ENCODE measurements at regions of chr17 and their contacts with region 1.

Region 1: DNA sequence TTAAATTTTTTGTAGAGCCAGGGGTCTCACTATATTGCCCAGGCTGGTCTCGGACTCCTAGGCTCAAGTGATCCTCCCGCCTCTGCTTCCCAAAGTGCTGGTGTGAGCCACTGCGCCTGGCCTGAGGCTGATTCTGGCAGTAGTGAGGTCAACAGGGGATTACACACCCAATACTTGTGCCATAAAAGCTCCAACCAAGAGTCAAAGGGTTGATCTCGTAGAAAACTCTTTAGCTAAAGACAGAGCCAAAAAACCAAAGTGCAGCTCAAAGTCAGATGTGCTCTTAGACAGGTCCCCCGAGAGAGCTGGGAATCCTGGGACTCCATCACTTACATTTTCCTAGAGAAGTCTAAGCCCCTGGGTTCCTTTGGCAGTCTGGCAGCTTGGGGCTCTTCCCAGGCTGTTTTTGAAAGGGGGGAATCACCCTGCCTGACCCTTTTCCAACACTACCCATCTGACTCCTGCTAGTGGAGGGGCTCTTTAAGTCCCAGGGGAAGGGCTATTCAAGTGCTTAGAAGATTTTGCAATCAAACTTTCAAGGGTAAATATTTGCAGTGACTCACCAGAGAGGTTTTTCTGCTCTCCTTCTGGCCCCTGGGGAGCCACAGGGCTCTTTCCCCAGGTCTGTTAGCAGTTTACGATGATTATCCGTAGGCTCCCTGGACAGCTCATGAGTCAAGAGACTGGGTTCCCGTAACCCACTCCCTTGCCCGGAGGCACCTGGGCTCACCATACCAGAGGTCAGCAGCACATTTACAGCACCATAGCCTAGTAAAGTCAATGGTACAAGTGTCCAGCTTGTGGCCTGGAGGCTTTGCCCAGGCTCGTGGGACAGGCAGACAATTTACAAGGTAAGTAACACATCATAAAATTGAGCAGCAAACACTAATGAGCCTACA is 408.7 kb downstream of the SLC39A11 start:
- DNase-seq: peak; percentile 98
- H3K4me3 Mint-ChIP-seq: peak overlapping the region; percentile 24
- H3K27ac Mint-ChIP-seq: peak overlapping the region; percentile 92
- H3K4me1 Mint-ChIP-seq: peaks cover 42% of the 10 kb centered on the region
- H3K27me3 Mint-ChIP-seq: no peaks in the 10 kb centered on the region
- CTCF ChIP-seq: no peak

Region 2: DNA sequence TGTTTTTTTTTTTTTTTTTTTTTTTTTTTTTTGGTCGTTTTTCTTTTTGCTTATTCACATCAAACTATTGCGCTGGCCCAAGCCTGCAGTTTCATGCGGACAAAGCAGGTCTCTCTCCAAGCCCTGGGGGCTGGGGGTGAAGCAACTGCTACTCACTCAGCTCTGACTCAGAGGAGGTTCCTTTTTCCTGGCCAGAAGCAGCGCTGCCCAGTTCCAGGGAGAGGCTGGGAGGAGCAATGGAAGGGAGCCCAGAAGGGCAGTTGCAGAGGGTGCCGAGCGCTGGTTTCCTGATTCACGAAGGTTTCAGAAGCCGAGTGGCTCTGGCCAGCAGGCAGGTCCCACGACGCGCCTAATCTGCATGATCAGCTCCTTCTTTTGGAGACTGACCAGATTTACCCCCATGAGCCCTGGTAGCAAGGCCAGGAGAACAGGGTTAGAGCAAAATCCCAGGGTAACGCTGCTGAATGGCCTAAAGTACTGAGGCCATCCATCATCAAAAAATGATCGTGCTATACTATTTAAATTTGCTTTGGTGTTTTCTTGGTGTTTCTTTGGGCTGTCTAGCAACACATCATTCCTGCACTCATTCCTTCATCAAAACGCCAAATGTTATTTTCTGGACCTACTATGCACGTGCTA is 707.6 kb before region 1 on chr17:
- CTCF ChIA-PET with region 1: no interaction called
- POLR2A ChIA-PET with region 1: no interaction called
- intact Hi-C with region 1: loop called (anchors 5 kb)
- DNase-seq: peak; percentile 99
- H3K4me3 Mint-ChIP-seq: peak overlapping the region; percentile 69
- H3K27ac Mint-ChIP-seq: peak overlapping the region; percentile 77
- H3K4me1 Mint-ChIP-seq: peaks cover 18% of the 10 kb centered on the region
- H3K27me3 Mint-ChIP-seq: no peaks in the 10 kb centered on the region
- CTCF ChIP-seq: no peak

Region 3: DNA sequence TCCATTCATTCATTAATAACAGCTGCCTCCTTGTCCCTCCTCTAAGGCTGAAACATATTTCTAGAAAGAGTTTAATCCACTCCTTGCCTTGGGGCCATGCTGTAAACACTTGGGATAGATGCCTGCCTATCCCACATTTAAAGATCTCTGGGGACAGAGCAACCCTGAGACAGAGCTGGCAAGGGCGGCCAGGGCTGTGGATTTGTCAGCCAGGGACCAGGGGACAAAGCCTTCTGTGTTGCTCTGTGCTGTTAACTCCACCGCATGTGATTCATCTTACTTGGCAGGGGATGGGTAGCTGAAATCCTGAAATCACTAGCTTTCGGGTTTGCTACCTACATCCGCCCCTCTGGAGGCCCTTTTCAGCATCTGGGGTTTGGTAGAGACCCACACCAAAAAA is 15.8 kb after region 1 on chr17:
- CTCF ChIA-PET with region 1: interaction called, 3 read pairs
- POLR2A ChIA-PET with region 1: interaction called, 10 read pairs
- intact Hi-C with region 1: no loop called
- DNase-seq: peak; percentile 70
- H3K4me3 Mint-ChIP-seq: no peak overlapping the region
- H3K27ac Mint-ChIP-seq: peak overlapping the region; percentile 51
- H3K4me1 Mint-ChIP-seq: peaks cover 24% of the 10 kb centered on the region
- H3K27me3 Mint-ChIP-seq: no peaks in the 10 kb centered on the region
- CTCF ChIP-seq: no peak